KBM-7 (cell line): ENCODE measurements at regions of chr2 and their contacts with region 1.

Region 1: GRCh38 chr2:207473049-207473930 is 56.5 kb upstream of the CREB1 start:
- DNase-seq: peak; percentile 41

Region 2: DNA sequence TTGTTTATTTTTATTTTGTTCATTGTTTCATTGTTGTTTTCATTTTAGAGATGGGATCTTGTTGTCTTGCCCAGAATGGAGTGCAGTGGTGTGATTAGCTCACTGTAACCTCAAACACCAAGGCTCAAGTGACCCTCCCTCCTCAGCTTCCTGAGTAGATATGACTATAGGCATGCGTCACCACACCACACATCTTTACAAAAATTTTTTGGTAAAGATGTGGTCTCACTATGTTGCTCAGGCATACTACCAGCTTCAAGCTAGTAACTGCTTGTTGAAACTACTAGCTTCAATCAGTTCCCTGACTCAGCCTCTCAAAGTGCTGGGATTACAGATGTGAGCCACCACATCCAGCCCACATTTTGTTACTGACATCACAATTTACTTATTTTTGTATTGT is 816.2 kb before region 1 on chr2:
- in situ Hi-C with region 1: loop called (anchors 25 kb)
- DNase-seq: no peak

Region 3: DNA sequence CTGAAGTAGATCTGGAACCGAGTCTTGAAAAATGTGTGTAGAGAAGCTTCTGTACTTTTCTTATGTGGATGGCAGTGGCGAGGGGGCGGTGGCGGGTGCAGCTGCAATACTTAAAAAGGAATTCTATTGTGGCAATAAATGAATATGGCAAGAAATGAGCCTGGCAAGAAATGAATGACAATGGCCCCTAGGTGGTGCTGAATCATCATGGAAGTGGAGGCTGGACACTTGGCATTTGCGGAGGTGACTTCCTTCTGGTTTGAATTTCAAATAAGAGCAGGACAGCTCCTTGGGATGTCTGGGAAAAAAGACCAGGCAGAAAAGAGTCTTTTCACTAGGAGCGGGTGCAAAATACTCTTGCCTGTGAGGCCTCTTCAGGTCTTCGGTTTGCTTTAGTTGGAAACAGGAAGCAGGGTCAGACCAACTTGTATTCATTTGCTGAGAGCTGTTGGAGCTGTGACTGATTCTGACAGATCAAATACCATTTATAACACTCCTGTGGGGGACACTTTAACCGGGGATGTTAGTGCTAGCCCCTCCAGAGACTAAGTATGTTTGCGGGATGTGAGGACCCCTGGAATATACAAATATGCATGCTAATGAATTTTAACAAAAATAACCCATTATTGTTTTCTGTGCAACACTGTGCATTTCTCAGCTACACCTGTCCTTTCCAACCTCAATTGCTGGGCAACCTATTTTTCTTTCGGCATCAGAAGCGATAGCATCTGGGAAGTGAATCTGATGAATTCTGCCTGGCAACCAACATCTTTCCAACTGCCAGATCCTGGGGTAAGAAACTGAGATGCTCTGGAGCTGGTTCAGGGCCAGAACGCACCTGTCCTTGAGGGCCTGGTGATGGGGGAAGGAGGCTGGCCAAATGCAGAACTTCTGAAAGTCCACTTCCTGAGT is 672.5 kb before region 1 on chr2:
- in situ Hi-C with region 1: loop called (anchors 25 kb)
- DNase-seq: peak; percentile 76

Region 4: GRCh38 chr2:206981739-206982340 is 491.4 kb before region 1 on chr2:
- in situ Hi-C with region 1: loop called (anchors 25 kb)
- DNase-seq: peak; percentile 80

Region 5: GRCh38 chr2:207725873-207726578 is 252.7 kb after region 1 on chr2:
- in situ Hi-C with region 1: no loop called
- DNase-seq: no peak